ENCODE measurements at regions of chr1 and their contacts with region 1.

Region 1: GRCh38 chr1:241998412-241998921 is 431 bp downstream of the MAP1LC3C start:
- DNase-seq: peak; percentile 67
- H3K4me3 Mint-ChIP-seq: peak overlapping the region; percentile 57
- H3K27ac Mint-ChIP-seq: no peak overlapping the region
- H3K4me1 Mint-ChIP-seq: peaks cover 5% of the 10 kb centered on the region
- H3K27me3 Mint-ChIP-seq: peaks cover 2% of the 10 kb centered on the region

Region 2: DNA sequence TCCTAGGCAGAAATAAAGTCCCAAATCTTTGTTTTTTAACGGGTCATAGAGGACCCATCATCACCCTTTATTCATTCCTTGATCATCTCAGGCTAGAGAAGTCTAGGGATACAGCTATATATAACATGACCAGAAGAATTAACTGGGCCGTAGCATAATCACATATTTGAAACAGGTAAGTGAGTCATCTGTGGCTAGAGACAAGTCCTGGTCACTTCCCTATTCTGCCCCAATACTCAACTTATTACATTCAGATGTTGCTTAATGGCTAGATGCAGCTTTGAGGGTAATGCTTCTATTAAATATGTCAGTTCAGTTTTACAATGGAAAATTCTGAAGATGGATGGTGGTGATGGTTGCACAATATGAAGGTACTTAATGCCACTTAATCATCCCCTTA is 103.5 kb before region 1 on chr1:
- CTCF ChIA-PET with region 1: interaction called, 21 read pairs
- POLR2A ChIA-PET with region 1: interaction called, 3 read pairs
- intact Hi-C with region 1: loop called (anchors 1 kb)
- DNase-seq: no peak
- H3K4me3 Mint-ChIP-seq: no peak overlapping the region
- H3K27ac Mint-ChIP-seq: no peak overlapping the region
- H3K4me1 Mint-ChIP-seq: no peaks in the 10 kb centered on the region
- H3K27me3 Mint-ChIP-seq: no peaks in the 10 kb centered on the region

Region 3: DNA sequence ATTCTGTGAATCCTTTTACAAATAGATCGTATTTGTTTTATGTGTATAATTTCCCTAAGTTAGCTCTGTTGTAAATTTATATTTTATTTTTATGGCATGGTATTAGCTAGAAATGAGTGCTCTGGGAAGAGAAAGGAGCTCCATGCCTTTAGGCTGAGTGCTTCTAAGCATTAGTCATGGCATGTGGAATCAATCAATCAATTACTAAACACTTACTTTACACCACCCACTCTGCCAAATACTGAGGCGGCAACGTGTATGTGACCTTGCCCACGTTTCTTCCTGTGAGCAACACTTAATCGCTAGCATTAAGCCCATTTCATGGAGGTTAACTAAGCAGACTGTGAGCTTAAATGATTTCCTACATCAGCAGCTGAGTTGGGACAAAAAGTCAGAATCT is 48.1 kb before region 1 on chr1:
- CTCF ChIA-PET with region 1: no interaction called
- POLR2A ChIA-PET with region 1: no interaction called
- intact Hi-C with region 1: no loop called
- DNase-seq: no peak
- H3K4me3 Mint-ChIP-seq: no peak overlapping the region
- H3K27ac Mint-ChIP-seq: no peak overlapping the region
- H3K4me1 Mint-ChIP-seq: no peaks in the 10 kb centered on the region
- H3K27me3 Mint-ChIP-seq: peaks cover 6% of the 10 kb centered on the region

Region 4: GRCh38 chr1:241985787-241986186 is 12.7 kb before region 1 on chr1:
- CTCF ChIA-PET with region 1: interaction called, 20 read pairs
- POLR2A ChIA-PET with region 1: no interaction called
- intact Hi-C with region 1: no loop called
- DNase-seq: peak; percentile 28
- H3K4me3 Mint-ChIP-seq: no peak overlapping the region
- H3K27ac Mint-ChIP-seq: no peak overlapping the region
- H3K4me1 Mint-ChIP-seq: no peaks in the 10 kb centered on the region
- H3K27me3 Mint-ChIP-seq: peaks cover 4% of the 10 kb centered on the region

Region 5: GRCh38 chr1:242008826-242009495 is 10.5 kb after region 1 on chr1:
- CTCF ChIA-PET with region 1: interaction called, 16 read pairs
- POLR2A ChIA-PET with region 1: no interaction called
- intact Hi-C with region 1: no loop called
- DNase-seq: no peak
- H3K4me3 Mint-ChIP-seq: no peak overlapping the region
- H3K27ac Mint-ChIP-seq: no peak overlapping the region
- H3K4me1 Mint-ChIP-seq: no peaks in the 10 kb centered on the region
- H3K27me3 Mint-ChIP-seq: peaks cover 2% of the 10 kb centered on the region

Measured in activated CD4-positive, alpha-beta memory T cell treated with anti-CD3 and anti-CD28 coated beads for 36 hours (primary cell).